Activated CD8-positive, alpha-beta T cell treated with anti-CD3 and anti-CD28 coated beads for 36 hours (primary cell): ENCODE measurements at regions of chr1 and their contacts with region 1.

Region 1: DNA sequence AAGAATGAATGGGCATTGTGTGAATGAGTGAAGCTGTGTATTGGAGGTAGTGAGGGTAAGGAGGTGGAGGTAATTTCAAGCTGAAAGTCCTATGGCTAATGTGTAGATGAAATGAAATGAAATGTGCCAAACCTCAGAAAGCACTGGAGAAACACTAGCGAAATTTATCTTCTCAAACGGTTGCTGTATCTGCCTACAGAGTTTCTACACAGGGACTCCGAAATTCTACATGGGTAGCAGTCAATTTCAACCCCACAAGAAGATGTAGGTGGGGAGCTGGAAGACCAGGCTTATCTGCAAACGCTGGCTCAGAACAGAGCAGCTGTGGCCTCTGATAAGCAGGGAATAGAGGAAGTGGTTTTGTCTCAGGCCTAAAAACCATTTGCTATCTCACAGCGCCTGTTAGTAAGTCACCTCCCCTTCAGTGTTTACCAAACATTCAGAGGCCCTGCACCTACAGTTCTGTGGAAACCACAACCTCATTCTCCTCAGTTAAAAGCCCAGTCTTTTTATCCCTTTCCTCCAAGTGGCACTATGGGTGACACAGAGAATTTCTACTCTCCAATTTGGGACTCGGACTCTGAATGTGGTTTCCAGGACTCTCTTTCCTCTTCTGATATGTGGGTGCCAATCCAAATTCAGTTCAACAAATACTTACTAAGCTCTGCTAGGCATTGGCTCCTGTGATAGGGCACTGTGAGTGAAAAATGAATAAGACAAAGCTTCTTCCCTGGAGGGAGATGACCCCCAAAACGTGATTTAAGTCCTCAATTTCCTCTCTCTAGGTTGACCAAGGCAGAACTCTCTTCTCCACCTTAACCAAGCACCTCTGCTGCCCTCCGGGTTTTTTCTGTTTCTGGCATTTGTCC is 17.2 kb upstream of the SLAMF6 start:
- DNase-seq: peak; percentile 60
- ATAC-seq: peak; percentile 88
- H3K4me3 Mint-ChIP-seq: peak overlapping the region; percentile 35
- H3K27ac Mint-ChIP-seq: peak overlapping the region; percentile 94
- H3K4me1 Mint-ChIP-seq: peaks cover 67% of the 10 kb centered on the region
- H3K27me3 Mint-ChIP-seq: no peaks in the 10 kb centered on the region
- CTCF ChIP-seq: no peak

Region 2: GRCh38 chr1:160410406-160411005 is 129.7 kb before region 1 on chr1:
- CTCF ChIA-PET with region 1: no interaction called
- POLR2A ChIA-PET with region 1: no interaction called
- intact Hi-C with region 1: no loop called
- DNase-seq: no peak
- ATAC-seq: no peak
- H3K4me3 Mint-ChIP-seq: no peak overlapping the region
- H3K27ac Mint-ChIP-seq: no peak overlapping the region
- H3K4me1 Mint-ChIP-seq: no peaks in the 10 kb centered on the region
- H3K27me3 Mint-ChIP-seq: no peaks in the 10 kb centered on the region
- CTCF ChIP-seq: no peak

Region 3: GRCh38 chr1:160483505-160484185 is 56.6 kb before region 1 on chr1:
- CTCF ChIA-PET with region 1: interaction called, 10 read pairs
- POLR2A ChIA-PET with region 1: no interaction called
- intact Hi-C with region 1: no loop called
- DNase-seq: no peak
- ATAC-seq: peak; percentile 69
- H3K4me3 Mint-ChIP-seq: no peak overlapping the region
- H3K27ac Mint-ChIP-seq: peak overlapping the region; percentile 44
- H3K4me1 Mint-ChIP-seq: peaks cover 44% of the 10 kb centered on the region
- H3K27me3 Mint-ChIP-seq: no peaks in the 10 kb centered on the region
- CTCF ChIP-seq: no peak

Region 4: DNA sequence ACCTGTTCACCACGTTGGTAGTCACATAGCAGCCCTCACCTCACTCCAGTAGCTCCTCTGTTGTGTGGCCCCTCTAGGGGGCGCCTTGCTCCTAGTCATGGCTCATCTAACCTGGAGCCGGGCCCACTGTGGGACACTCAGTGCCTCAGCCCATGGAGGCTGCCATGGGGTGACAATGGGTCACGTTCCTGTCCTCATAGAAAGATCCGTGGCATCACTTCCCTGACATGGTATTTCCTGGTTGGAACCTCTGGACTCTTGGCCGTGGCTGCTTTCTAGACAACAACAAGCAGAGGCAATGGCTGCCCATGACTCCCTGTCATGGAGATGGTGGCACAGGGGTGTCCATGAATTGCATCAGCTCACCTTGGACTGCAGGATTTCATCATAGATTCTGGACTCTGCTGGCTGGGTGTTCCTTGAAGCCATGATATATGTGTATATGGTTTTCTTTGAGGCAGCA is 10.4 kb after region 1 on chr1:
- CTCF ChIA-PET with region 1: interaction called, 24 read pairs
- POLR2A ChIA-PET with region 1: interaction called, 5 read pairs
- intact Hi-C with region 1: no loop called
- DNase-seq: peak; percentile 79
- ATAC-seq: peak; percentile 91
- H3K4me3 Mint-ChIP-seq: no peak overlapping the region
- H3K27ac Mint-ChIP-seq: peak overlapping the region; percentile 60
- H3K4me1 Mint-ChIP-seq: peaks cover 28% of the 10 kb centered on the region
- H3K27me3 Mint-ChIP-seq: no peaks in the 10 kb centered on the region
- CTCF ChIP-seq: peak; percentile 65

Region 5: GRCh38 chr1:160567858-160568682 is 27.8 kb after region 1 on chr1:
- CTCF ChIA-PET with region 1: interaction called, 100 read pairs
- POLR2A ChIA-PET with region 1: interaction called, 3 read pairs
- intact Hi-C with region 1: no loop called
- DNase-seq: peak; percentile 92
- ATAC-seq: peak; percentile 94
- H3K4me3 Mint-ChIP-seq: peak overlapping the region; percentile 51
- H3K27ac Mint-ChIP-seq: peak overlapping the region; percentile 96
- H3K4me1 Mint-ChIP-seq: peaks cover 89% of the 10 kb centered on the region
- H3K27me3 Mint-ChIP-seq: no peaks in the 10 kb centered on the region
- CTCF ChIP-seq: no peak

Region 6: GRCh38 chr1:160726498-160727315 is 186.5 kb after region 1 on chr1:
- CTCF ChIA-PET with region 1: no interaction called
- POLR2A ChIA-PET with region 1: no interaction called
- intact Hi-C with region 1: no loop called
- DNase-seq: peak; percentile 74
- ATAC-seq: peak; percentile 79
- H3K4me3 Mint-ChIP-seq: no peak overlapping the region
- H3K27ac Mint-ChIP-seq: no peak overlapping the region
- H3K4me1 Mint-ChIP-seq: peaks cover 32% of the 10 kb centered on the region
- H3K27me3 Mint-ChIP-seq: no peaks in the 10 kb centered on the region
- CTCF ChIP-seq: peak; percentile 99